ENCODE measurements at regions of chr22 and their contacts with region 1.

Region 1: GRCh38 chr22:30104501-30105156 is 24.4 kb downstream of the HORMAD2 start:
- DNase-seq: peak in 1 of 35 experiments; percentile 35
- ATAC-seq: peak; percentile 50 to 85 (median 71)
- H3K4me3 ChIP-seq: no peak overlapping the region
- H3K4me3 Mint-ChIP-seq: peak overlapping the region in 1 of 3 donors; percentile 25
- H3K27ac ChIP-seq: no peak overlapping the region
- H3K27ac Mint-ChIP-seq: peak overlapping the region in 1 of 2 donors; percentile 65
- H3K4me1 ChIP-seq: peaks cover 9 to 12% of the 10 kb centered on the region in 2 experiments
- H3K4me1 Mint-ChIP-seq: peaks cover 32 to 43% (median 39%) of the 10 kb centered on the region in 3 donors
- H3K27me3 ChIP-seq: no peaks in the 10 kb centered on the region
- H3K27me3 Mint-ChIP-seq: no peaks in the 10 kb centered on the region

Region 2: GRCh38 chr22:29641042-29641699 is 463.5 kb before region 1 on chr22:
- CTCF ChIA-PET with region 1: no interaction called
- POLR2A ChIA-PET with region 1: no interaction called
- DNase-seq: no peak
- ATAC-seq: no peak
- H3K4me3 ChIP-seq: no peak overlapping the region
- H3K4me3 Mint-ChIP-seq: no peak overlapping the region
- H3K27ac ChIP-seq: no peak overlapping the region
- H3K27ac Mint-ChIP-seq: peak overlapping the region in 1 of 2 donors; percentile 41
- H3K4me1 ChIP-seq: peaks cover 0 to 3% of the 10 kb centered on the region in 2 experiments
- H3K4me1 Mint-ChIP-seq: peaks cover 9 to 11% (median 11%) of the 10 kb centered on the region in 3 donors
- H3K27me3 ChIP-seq: no peaks in the 10 kb centered on the region
- H3K27me3 Mint-ChIP-seq: no peaks in the 10 kb centered on the region

Region 3: GRCh38 chr22:29733362-29734201 is 371.0 kb before region 1 on chr22:
- CTCF ChIA-PET with region 1: no interaction called
- POLR2A ChIA-PET with region 1: no interaction called
- DNase-seq: no peak
- ATAC-seq: no peak
- H3K4me3 ChIP-seq: no peak overlapping the region
- H3K4me3 Mint-ChIP-seq: no peak overlapping the region
- H3K27ac ChIP-seq: no peak overlapping the region
- H3K27ac Mint-ChIP-seq: no peak overlapping the region
- H3K4me1 ChIP-seq: no peaks in the 10 kb centered on the region
- H3K4me1 Mint-ChIP-seq: no peaks in the 10 kb centered on the region
- H3K27me3 ChIP-seq: no peaks in the 10 kb centered on the region
- H3K27me3 Mint-ChIP-seq: no peaks in the 10 kb centered on the region

Region 4: GRCh38 chr22:30444632-30445437 is 340.2 kb after region 1 on chr22:
- CTCF ChIA-PET with region 1: interaction called in 1 of 2 experiments, 10 read pairs
- POLR2A ChIA-PET with region 1: no interaction called
- DNase-seq: peak in 17 of 35 experiments; percentile 22 to 74 (median 38)
- ATAC-seq: peak in 3 of 4 experiments; percentile 42 to 49 (median 44)
- H3K4me3 ChIP-seq: no peak overlapping the region
- H3K4me3 Mint-ChIP-seq: no peak overlapping the region
- H3K27ac ChIP-seq: no peak overlapping the region
- H3K27ac Mint-ChIP-seq: no peak overlapping the region
- H3K4me1 ChIP-seq: peaks cover 0 to 17% of the 10 kb centered on the region in 2 experiments
- H3K4me1 Mint-ChIP-seq: peaks cover 15 to 26% (median 23%) of the 10 kb centered on the region in 3 donors
- H3K27me3 ChIP-seq: peaks cover 2 to 71% of the 10 kb centered on the region in 2 experiments
- H3K27me3 Mint-ChIP-seq: peaks cover 40 to 50% of the 10 kb centered on the region in 2 donors

Measured in T-cell (primary cell).